ENCODE measurements at regions of chr14 and their contacts with region 1.

Region 1: DNA sequence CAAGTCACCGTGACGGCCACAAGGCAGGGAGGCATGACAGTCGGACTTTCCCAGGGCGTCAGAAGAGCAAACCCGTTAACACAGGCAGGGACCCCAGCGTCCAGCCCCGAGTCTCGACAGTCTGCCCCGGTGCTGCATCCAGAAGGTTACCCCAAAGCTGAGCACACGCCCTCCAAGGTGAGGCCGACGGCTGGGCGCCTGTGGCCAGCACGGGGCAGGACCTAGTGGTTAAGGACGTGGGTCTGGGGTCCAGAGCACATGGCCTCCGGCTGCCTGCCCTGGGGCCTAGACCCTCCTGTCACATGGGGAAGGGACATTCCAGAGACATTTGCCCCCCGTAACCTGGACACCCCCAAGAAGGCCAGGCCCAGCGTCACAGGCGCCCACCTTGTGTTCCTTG is 29.7 kb upstream of the BTBD6 start:
- DNase-seq: no peak
- ATAC-seq: no peak
- H3K4me3 ChIP-seq: no peak overlapping the region
- H3K27ac ChIP-seq: no peak overlapping the region
- H3K4me1 ChIP-seq: peaks cover 0 to 19% (median 7%) of the 10 kb centered on the region in 9 donors
- H3K27me3 ChIP-seq: no peaks in the 10 kb centered on the region
- CTCF ChIP-seq: no peak

Region 2: GRCh38 chr14:105005329-105005928 is 213.2 kb before region 1 on chr14:
- intact Hi-C with region 1: no loop called
- DNase-seq: no peak
- ATAC-seq: no peak
- H3K4me3 ChIP-seq: no peak overlapping the region
- H3K27ac ChIP-seq: no peak overlapping the region
- H3K4me1 ChIP-seq: no peaks in the 10 kb centered on the region
- H3K27me3 ChIP-seq: no peaks in the 10 kb centered on the region
- CTCF ChIP-seq: no peak

Region 3: GRCh38 chr14:105173901-105174894 is 44.4 kb before region 1 on chr14:
- intact Hi-C with region 1: loop called in 1 of 10 experiments (anchors 1 kb)
- DNase-seq: no peak
- ATAC-seq: no peak
- H3K4me3 ChIP-seq: no peak overlapping the region
- H3K27ac ChIP-seq: no peak overlapping the region
- H3K4me1 ChIP-seq: peaks cover 15 to 34% (median 22%) of the 10 kb centered on the region in 9 donors
- H3K27me3 ChIP-seq: peaks cover 0 to 24% (median 0%) of the 10 kb centered on the region in 7 donors
- CTCF ChIP-seq: no peak